Right cardiac atrium (tissue), 5 donors: ENCODE measurements at regions of chr16 and their contacts with region 1.

Region 1: GRCh38 chr16:56700195-56700594 is 17.9 kb downstream of the MT1X start:
- DNase-seq: no peak
- ATAC-seq: no peak
- H3K4me3 ChIP-seq: no peak overlapping the region
- H3K27ac ChIP-seq: no peak overlapping the region
- H3K4me1 ChIP-seq: no peaks in the 10 kb centered on the region
- H3K27me3 ChIP-seq: no peaks in the 10 kb centered on the region

Region 2: DNA sequence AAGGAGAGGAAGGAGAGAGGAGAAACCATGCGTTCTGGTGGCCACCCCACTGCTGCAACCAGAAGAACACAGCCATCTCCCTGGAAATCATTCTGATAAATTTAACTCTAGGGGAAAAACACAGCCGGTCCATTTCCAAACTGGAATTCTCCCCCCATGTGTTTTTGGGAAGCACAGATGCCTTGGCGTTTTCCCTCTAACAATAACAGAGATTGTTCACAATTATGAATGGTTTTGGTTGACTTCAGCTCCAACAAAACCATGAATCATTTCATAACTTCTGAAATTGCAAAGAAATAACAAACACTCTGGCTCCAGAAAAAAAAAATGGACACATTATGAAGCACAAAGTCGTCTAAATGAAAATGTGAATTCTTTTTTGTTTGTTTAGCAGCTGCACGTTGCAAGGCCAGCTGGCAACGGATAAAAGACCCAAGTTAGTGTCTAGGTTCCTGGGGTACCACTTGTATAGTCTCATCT is 462.7 kb before region 1 on chr16:
- intact Hi-C with region 1: no loop called
- DNase-seq: no peak
- ATAC-seq: peak; percentile 50 to 60
- H3K4me3 ChIP-seq: no peak overlapping the region
- H3K27ac ChIP-seq: peak overlapping the region; percentile 51
- H3K4me1 ChIP-seq: peaks cover 11% of the 10 kb centered on the region
- H3K27me3 ChIP-seq: no peaks in the 10 kb centered on the region

Region 3: DNA sequence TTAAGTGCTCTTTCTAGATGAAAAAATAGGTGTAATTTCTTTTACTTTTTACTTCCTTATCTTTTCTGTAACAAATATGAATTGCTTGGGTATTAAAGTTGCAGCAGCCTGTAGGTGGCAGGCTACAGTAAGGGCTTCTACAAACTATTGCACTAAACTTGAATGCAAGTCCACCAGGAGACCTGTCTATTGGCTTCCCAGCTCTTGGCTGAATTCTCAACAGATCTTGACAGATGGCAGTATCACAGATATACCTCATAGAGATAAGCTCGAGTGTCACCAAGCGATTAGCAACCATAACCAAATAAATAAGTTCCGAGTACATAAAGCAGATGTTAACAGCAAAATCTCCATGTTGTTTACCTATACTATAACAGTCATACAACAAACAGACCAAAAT is 186.2 kb before region 1 on chr16:
- intact Hi-C with region 1: loop called in 3 of 4 experiments (anchors 5 to 10 kb)
- DNase-seq: peak in 1 of 3 donors; percentile 45
- ATAC-seq: peak; percentile 58 to 70
- H3K4me3 ChIP-seq: no peak overlapping the region
- H3K27ac ChIP-seq: no peak overlapping the region
- H3K4me1 ChIP-seq: peaks cover 7% of the 10 kb centered on the region
- H3K27me3 ChIP-seq: no peaks in the 10 kb centered on the region

Region 4: GRCh38 chr16:56600398-56600999 is 99.7 kb before region 1 on chr16:
- intact Hi-C with region 1: loop called (anchors 2 to 10 kb)
- DNase-seq: no peak
- ATAC-seq: peak; percentile 37 to 51
- H3K4me3 ChIP-seq: no peak overlapping the region
- H3K27ac ChIP-seq: no peak overlapping the region
- H3K4me1 ChIP-seq: no peaks in the 10 kb centered on the region
- H3K27me3 ChIP-seq: no peaks in the 10 kb centered on the region

Region 5: GRCh38 chr16:56673921-56674320 is 26.3 kb before region 1 on chr16:
- intact Hi-C with region 1: loop called in 1 of 4 experiments (anchors 2 kb)
- DNase-seq: no peak
- ATAC-seq: peak; percentile 58 to 61
- H3K4me3 ChIP-seq: no peak overlapping the region
- H3K27ac ChIP-seq: no peak overlapping the region
- H3K4me1 ChIP-seq: peaks cover 3% of the 10 kb centered on the region
- H3K27me3 ChIP-seq: no peaks in the 10 kb centered on the region